Activated CD4-positive, alpha-beta T cell treated with anti-CD3 and anti-CD28 coated beads for 36 hours (primary cell): ENCODE measurements at regions of chr4 and their contacts with region 1.

Region 1: GRCh38 chr4:25234390-25235370 is 847 bp downstream of the PI4K2B start:
- DNase-seq: peak; percentile 58
- ATAC-seq: peak; percentile 62
- H3K4me3 Mint-ChIP-seq: peak overlapping the region; percentile 91
- H3K27ac Mint-ChIP-seq: peak overlapping the region; percentile 97
- H3K4me1 Mint-ChIP-seq: peaks cover 45% of the 10 kb centered on the region
- H3K27me3 Mint-ChIP-seq: no peaks in the 10 kb centered on the region

Region 2: GRCh38 chr4:25180524-25181131 is 54.1 kb before region 1 on chr4:
- CTCF ChIA-PET with region 1: interaction called, 5 read pairs
- POLR2A ChIA-PET with region 1: no interaction called
- intact Hi-C with region 1: loop called in 1 of 2 experiments (anchors 2 kb)
- DNase-seq: peak; percentile 50
- ATAC-seq: peak; percentile 57
- H3K4me3 Mint-ChIP-seq: no peak overlapping the region
- H3K27ac Mint-ChIP-seq: no peak overlapping the region
- H3K4me1 Mint-ChIP-seq: peaks cover 33% of the 10 kb centered on the region
- H3K27me3 Mint-ChIP-seq: no peaks in the 10 kb centered on the region

Region 3: GRCh38 chr4:25320773-25321172 is 86.1 kb after region 1 on chr4:
- CTCF ChIA-PET with region 1: interaction called, 3 read pairs
- POLR2A ChIA-PET with region 1: no interaction called
- intact Hi-C with region 1: loop called in 1 of 2 experiments (anchors 2 kb)
- DNase-seq: no peak
- ATAC-seq: peak; percentile 93
- H3K4me3 Mint-ChIP-seq: peak overlapping the region; percentile 16
- H3K27ac Mint-ChIP-seq: peak overlapping the region; percentile 89
- H3K4me1 Mint-ChIP-seq: peaks cover 37% of the 10 kb centered on the region
- H3K27me3 Mint-ChIP-seq: no peaks in the 10 kb centered on the region

Region 4: GRCh38 chr4:25376754-25377571 is 142.3 kb after region 1 on chr4 and contains the start of gene ANAPC4:
- CTCF ChIA-PET with region 1: no interaction called
- POLR2A ChIA-PET with region 1: interaction called, 6 read pairs
- intact Hi-C with region 1: loop called (anchors 1 to 2 kb)
- DNase-seq: peak; percentile 99
- ATAC-seq: peak; percentile 98
- H3K4me3 Mint-ChIP-seq: no peak within 1 kb of the TSS
- H3K27ac Mint-ChIP-seq: peak within 1 kb of the TSS; percentile 74
- H3K4me1 Mint-ChIP-seq: peaks cover 8% of the 10 kb centered on the region
- H3K27me3 Mint-ChIP-seq: no peaks in the 10 kb centered on the region
- total RNA-seq, gene ANAPC4: 19.2 to 31.2 TPM

Region 5: GRCh38 chr4:25862411-25863346 is 628.0 kb after region 1 on chr4 and contains the start of gene SEL1L3:
- CTCF ChIA-PET with region 1: no interaction called
- POLR2A ChIA-PET with region 1: no interaction called
- intact Hi-C with region 1: loop called in 1 of 2 experiments (anchors 5 kb)
- DNase-seq: peak; percentile 79
- ATAC-seq: peak; percentile 33
- H3K4me3 Mint-ChIP-seq: peak within 1 kb of the TSS; percentile 94
- H3K27ac Mint-ChIP-seq: peak within 1 kb of the TSS; percentile 96
- H3K4me1 Mint-ChIP-seq: peaks cover 40% of the 10 kb centered on the region
- H3K27me3 Mint-ChIP-seq: no peaks in the 10 kb centered on the region
- total RNA-seq, gene SEL1L3: 31.9 to 34.8 TPM

Region 6: DNA sequence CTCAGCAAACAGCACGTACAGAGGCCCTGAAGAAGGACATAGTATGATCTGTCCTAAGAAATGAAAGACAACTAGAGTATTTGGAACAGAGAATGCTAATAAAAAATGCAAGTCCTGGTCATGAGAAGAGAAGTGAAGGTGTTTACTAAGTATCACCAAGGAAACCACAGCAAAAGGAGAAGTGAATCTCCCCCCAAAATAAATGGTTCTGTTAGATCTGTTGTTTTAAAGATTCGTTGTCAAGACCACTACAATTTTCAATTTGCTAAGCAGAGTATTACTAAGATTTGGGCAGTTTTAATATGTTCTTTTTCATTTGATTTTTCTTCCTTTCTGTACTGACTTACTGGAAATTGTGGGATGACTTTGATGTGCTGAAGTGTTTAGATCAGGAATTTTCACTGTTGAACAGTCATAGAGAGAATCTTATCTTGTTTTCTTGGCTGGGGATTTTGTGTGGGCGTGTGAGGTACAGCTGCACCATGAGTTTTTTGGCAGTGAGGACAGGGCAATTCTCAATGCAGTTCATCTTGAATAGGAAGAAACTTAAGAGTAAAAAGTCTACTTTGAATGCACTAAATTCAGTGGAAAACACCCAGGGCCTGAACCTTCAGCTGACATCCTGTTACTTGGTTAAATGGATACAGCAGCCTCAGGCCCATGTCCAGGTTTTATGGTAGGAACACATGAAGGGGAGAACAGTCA is 1758.1 kb after region 1 on chr4:
- CTCF ChIA-PET with region 1: no interaction called
- POLR2A ChIA-PET with region 1: no interaction called
- intact Hi-C with region 1: loop called in 1 of 2 experiments (anchors 10 kb)
- DNase-seq: peak; percentile 53
- ATAC-seq: peak; percentile 59
- H3K4me3 Mint-ChIP-seq: no peak overlapping the region
- H3K27ac Mint-ChIP-seq: no peak overlapping the region
- H3K4me1 Mint-ChIP-seq: peaks cover 23% of the 10 kb centered on the region
- H3K27me3 Mint-ChIP-seq: no peaks in the 10 kb centered on the region